HepG2 (cell line): ENCODE measurements at regions of chr20 and their contacts with region 1.

Region 1: GRCh38 chr20:9978397-9979004 is 56.3 kb upstream of the ANKEF1 start:
- DNase-seq: peak; percentile 82
- ATAC-seq: peak; percentile 95
- H3K4me3 ChIP-seq: no peak overlapping the region
- H3K27ac ChIP-seq: no peak overlapping the region
- H3K4me1 ChIP-seq: no peaks in the 10 kb centered on the region
- H3K27me3 ChIP-seq: no peaks in the 10 kb centered on the region
- CTCF ChIP-seq: peak; percentile 94
- EP300 ChIP-seq: no peak
- POLR2A ChIP-seq: no peak
- RAD21 ChIP-seq: peak; percentile 92

Region 2: GRCh38 chr20:9775176-9775575 is 203.3 kb before region 1 on chr20:
- CTCF ChIA-PET with region 1: no interaction called
- POLR2A ChIA-PET with region 1: no interaction called
- in situ Hi-C with region 1: no loop called
- intact Hi-C with region 1: no loop called
- DNase-seq: no peak
- ATAC-seq: no peak
- H3K4me3 ChIP-seq: no peak overlapping the region
- H3K27ac ChIP-seq: no peak overlapping the region
- H3K4me1 ChIP-seq: no peaks in the 10 kb centered on the region
- H3K27me3 ChIP-seq: no peaks in the 10 kb centered on the region
- CTCF ChIP-seq: no peak
- EP300 ChIP-seq: no peak
- POLR2A ChIP-seq: no peak
- RAD21 ChIP-seq: no peak

Region 3: GRCh38 chr20:9999645-10000044 is 21.1 kb after region 1 on chr20:
- CTCF ChIA-PET with region 1: no interaction called
- POLR2A ChIA-PET with region 1: no interaction called
- in situ Hi-C with region 1: no loop called
- intact Hi-C with region 1: no loop called
- DNase-seq: no peak
- ATAC-seq: no peak
- H3K4me3 ChIP-seq: no peak overlapping the region
- H3K27ac ChIP-seq: no peak overlapping the region
- H3K4me1 ChIP-seq: no peaks in the 10 kb centered on the region
- H3K27me3 ChIP-seq: no peaks in the 10 kb centered on the region
- CTCF ChIP-seq: no peak
- EP300 ChIP-seq: no peak
- POLR2A ChIP-seq: no peak
- RAD21 ChIP-seq: no peak

Region 4: GRCh38 chr20:10047427-10047826 is 68.9 kb after region 1 on chr20:
- CTCF ChIA-PET with region 1: no interaction called
- POLR2A ChIA-PET with region 1: no interaction called
- in situ Hi-C with region 1: no loop called
- intact Hi-C with region 1: loop called (anchors 1 kb)
- DNase-seq: peak; percentile 39
- ATAC-seq: peak; percentile 98
- H3K4me3 ChIP-seq: no peak overlapping the region
- H3K27ac ChIP-seq: no peak overlapping the region
- H3K4me1 ChIP-seq: no peaks in the 10 kb centered on the region
- H3K27me3 ChIP-seq: no peaks in the 10 kb centered on the region
- CTCF ChIP-seq: peak; percentile 46
- EP300 ChIP-seq: no peak
- POLR2A ChIP-seq: no peak
- RAD21 ChIP-seq: no peak

Region 5: GRCh38 chr20:10090588-10091166 is 112.2 kb after region 1 on chr20:
- CTCF ChIA-PET with region 1: interaction called, 57 read pairs
- POLR2A ChIA-PET with region 1: no interaction called
- in situ Hi-C with region 1: loop called (anchors 5 kb)
- intact Hi-C with region 1: loop called (anchors 1 kb)
- DNase-seq: peak; percentile 63
- ATAC-seq: peak; percentile 99
- H3K4me3 ChIP-seq: no peak overlapping the region
- H3K27ac ChIP-seq: no peak overlapping the region
- H3K4me1 ChIP-seq: no peaks in the 10 kb centered on the region
- H3K27me3 ChIP-seq: no peaks in the 10 kb centered on the region
- CTCF ChIP-seq: peak; percentile 84
- EP300 ChIP-seq: no peak
- POLR2A ChIP-seq: no peak
- RAD21 ChIP-seq: peak; percentile 78

Region 6: GRCh38 chr20:10316582-10316981 is 338.1 kb after region 1 on chr20:
- CTCF ChIA-PET with region 1: interaction called, 3 read pairs
- POLR2A ChIA-PET with region 1: no interaction called
- in situ Hi-C with region 1: no loop called
- intact Hi-C with region 1: loop called (anchors 5 kb)
- DNase-seq: peak; percentile 78
- ATAC-seq: peak; percentile 95
- H3K4me3 ChIP-seq: no peak overlapping the region
- H3K27ac ChIP-seq: no peak overlapping the region
- H3K4me1 ChIP-seq: peaks cover 24% of the 10 kb centered on the region
- H3K27me3 ChIP-seq: no peaks in the 10 kb centered on the region
- CTCF ChIP-seq: peak; percentile 93
- EP300 ChIP-seq: no peak
- POLR2A ChIP-seq: no peak
- RAD21 ChIP-seq: peak; percentile 95

Region 7: GRCh38 chr20:10427060-10427692 is 448.7 kb after region 1 on chr20:
- CTCF ChIA-PET with region 1: interaction called, 11 read pairs
- POLR2A ChIA-PET with region 1: no interaction called
- in situ Hi-C with region 1: loop called (anchors 10 kb)
- intact Hi-C with region 1: loop called (anchors 1 kb)
- DNase-seq: peak; percentile 71
- ATAC-seq: peak; percentile 42; the same call in 1 of the 3 replicates
- H3K4me3 ChIP-seq: no peak overlapping the region
- H3K27ac ChIP-seq: no peak overlapping the region
- H3K4me1 ChIP-seq: peaks cover 65% of the 10 kb centered on the region
- H3K27me3 ChIP-seq: no peaks in the 10 kb centered on the region
- CTCF ChIP-seq: peak; percentile 83
- EP300 ChIP-seq: no peak
- POLR2A ChIP-seq: no peak
- RAD21 ChIP-seq: peak; percentile 84

Region 8: GRCh38 chr20:11204926-11205768 is 1226.6 kb after region 1 on chr20:
- CTCF ChIA-PET with region 1: no interaction called
- POLR2A ChIA-PET with region 1: no interaction called
- in situ Hi-C with region 1: no loop called
- intact Hi-C with region 1: loop called (anchors 1 kb)
- DNase-seq: peak; percentile 71
- ATAC-seq: peak; percentile 98
- H3K4me3 ChIP-seq: no peak overlapping the region
- H3K27ac ChIP-seq: no peak overlapping the region
- H3K4me1 ChIP-seq: peaks cover 11% of the 10 kb centered on the region
- H3K27me3 ChIP-seq: no peaks in the 10 kb centered on the region
- CTCF ChIP-seq: peak; percentile 91
- EP300 ChIP-seq: no peak
- POLR2A ChIP-seq: no peak
- RAD21 ChIP-seq: peak; percentile 74

Region 9: DNA sequence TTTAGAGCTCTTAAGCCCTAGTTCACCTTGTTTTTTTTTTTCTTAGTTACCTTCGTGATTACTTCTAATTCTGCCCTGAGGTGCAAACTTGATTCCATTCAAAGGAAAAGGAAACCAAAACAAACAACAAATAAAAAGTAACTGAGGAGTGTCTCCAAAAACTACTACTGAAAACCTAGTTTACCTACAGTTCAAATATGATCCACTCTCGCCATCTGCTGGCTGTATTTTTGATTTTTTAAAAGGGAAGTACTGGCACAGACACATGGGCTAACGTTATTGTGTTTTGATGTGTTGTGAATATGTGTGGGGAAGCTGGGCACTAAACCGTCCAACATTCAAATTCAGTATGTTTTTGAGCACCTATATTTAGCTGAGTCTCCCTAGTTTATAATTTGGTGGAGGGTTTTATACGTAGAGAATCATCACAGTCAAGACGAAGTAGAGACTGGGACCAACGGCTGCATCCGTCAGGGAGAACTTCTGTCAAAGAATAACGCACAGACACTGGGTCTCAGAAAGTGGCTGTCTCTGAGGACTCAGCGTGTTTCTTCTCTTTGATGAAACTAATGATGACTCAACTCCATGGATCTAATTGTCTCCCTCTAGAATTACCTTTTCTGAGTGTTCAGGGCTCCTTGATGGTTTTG is 1565.7 kb after region 1 on chr20:
- CTCF ChIA-PET with region 1: interaction called, 9 read pairs
- POLR2A ChIA-PET with region 1: no interaction called
- in situ Hi-C with region 1: loop called (anchors 10 kb)
- intact Hi-C with region 1: loop called (anchors 1 kb)
- DNase-seq: peak; percentile 72
- ATAC-seq: peak; percentile 88
- H3K4me3 ChIP-seq: no peak overlapping the region
- H3K27ac ChIP-seq: no peak overlapping the region
- H3K4me1 ChIP-seq: peaks cover 12% of the 10 kb centered on the region
- H3K27me3 ChIP-seq: no peaks in the 10 kb centered on the region; a peak in 1 of 5 replicates
- CTCF ChIP-seq: peak; percentile 85
- EP300 ChIP-seq: no peak
- POLR2A ChIP-seq: no peak
- RAD21 ChIP-seq: peak; percentile 41; the same call in 1 of the 2 replicates